ENCODE measurements at regions of chr16 and their contacts with region 1.

Region 1: DNA sequence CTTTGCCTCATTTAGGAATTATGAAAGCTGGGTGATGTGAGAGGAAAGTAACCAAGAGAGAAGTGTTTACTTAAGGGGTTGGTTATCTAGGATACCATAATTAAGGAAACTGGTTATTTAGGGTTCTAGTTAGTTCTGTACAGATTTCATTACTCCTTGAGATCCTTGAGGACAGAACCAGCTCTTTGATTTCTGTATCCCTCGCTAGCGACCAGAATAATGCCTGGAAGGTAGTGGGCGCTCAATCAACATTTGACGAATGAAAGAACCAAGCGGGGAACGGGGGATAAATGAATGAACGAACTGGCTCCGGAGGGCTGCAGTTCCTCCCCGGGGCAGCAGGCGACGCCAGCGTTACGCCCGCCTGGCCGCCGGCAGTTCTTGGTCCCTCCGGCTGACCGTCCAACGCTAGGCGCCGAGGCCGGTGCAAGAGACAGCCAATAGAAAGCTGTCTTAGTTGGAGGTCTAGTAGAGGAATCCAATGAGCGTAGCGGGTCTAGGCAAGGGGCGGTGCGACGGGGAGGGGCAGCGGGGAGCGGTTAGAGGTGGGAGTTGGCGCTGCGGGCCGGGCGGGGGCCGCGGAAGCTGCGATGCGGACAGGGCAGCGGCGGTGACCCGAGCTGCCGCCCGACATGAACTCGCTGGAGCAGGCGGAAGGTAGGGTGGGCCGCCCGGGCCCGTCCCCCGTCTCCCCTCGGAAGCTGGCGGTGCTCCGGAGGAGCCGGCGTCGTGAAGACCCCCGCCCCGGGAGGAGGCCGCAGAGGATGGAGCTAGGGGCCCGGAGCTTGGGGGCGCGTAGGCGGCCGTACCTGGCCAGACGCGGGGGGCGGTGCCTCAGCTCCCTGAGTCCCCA is at the start of gene CNEP1R1:
- DNase-seq: peak; percentile 96
- total RNA-seq, gene CNEP1R1: 17.9 TPM

Region 2: GRCh38 chr16:49918257-49918656 is 106.7 kb before region 1 on chr16:
- intact Hi-C with region 1: no loop called
- DNase-seq: no peak

Region 3: DNA sequence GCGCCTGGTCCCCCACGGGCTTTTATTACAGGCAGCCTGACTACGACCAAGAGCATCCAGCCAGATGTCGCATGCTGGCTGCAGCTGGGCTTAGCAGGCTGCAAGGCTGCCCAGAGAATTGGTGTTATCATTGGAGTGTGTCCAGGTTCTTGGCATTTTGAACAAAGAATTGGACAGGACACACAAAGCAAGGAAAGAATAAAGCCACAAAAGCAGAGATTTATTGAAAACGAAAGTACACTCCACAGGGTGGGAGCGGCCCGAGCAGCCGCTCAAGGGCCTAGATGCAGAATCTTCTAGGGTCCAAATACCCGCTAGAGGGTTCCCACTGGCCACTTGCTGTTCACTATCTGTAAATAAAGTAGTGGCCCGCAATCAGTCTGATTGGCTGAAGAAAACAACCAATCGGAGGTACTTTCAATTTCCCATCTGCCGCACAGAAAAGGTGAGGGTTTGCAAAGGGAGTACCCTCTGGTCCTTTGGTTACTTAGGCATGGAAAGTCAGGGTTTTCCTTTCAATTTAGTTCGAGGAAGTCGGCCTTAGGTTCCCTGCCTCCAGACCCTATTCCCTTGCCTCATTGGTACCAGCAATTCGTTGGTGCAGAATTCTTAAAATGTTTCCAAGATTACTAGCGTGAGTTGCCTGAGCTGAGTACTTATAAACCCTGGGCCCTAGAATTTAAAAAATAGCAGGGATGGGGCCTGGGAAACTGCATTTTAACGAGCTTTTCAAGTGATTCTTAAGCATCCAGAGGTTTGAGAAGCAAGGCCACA is 38.4 kb before region 1 on chr16:
- intact Hi-C with region 1: no loop called
- DNase-seq: no peak

Region 4: DNA sequence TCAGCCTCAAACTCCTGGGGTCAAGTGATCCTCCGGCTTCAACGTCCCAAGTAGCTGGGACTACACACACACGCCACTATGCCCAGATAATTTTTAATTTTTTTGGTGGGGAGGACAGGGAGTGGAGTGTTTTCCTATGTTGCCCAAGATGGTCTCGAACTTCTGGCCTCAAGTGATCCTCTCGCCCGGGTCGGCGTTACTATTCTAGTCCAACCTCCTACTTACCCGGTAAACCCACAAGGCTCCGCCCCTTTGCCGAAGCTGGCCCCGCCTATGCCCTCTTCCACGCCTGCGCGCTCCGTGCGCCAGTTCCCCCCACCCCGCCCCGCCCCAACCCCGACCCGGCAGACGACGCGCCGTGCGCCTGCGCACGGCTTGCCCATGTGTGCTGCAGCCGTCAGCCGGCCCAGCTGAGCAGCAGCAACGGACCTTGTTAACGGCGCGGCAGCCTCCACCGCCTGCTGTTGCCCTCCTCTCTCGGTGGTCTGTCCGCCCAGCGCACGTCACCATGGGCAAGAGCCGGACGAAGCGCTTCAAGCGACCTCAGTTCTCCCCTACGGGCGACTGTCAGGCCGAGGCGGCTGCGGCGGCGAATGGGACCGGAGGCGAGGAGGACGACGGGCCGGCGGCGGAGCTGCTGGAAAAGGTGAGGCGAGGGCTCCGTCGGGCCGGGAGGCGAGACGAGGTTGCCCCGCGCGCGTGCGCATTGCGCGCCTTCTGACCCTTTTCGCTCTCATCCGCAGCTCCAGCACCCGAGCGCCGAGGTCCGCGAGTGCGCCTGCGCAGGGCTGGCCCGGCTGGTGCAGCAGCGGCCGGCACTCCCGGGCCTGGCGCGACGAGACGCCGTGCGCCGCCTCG is 40.9 kb after region 1 on chr16 and contains the start of gene HEATR3:
- intact Hi-C with region 1: loop called (anchors 2 kb)
- DNase-seq: peak; percentile 98
- total RNA-seq, gene HEATR3: 10.3 TPM

Region 5: DNA sequence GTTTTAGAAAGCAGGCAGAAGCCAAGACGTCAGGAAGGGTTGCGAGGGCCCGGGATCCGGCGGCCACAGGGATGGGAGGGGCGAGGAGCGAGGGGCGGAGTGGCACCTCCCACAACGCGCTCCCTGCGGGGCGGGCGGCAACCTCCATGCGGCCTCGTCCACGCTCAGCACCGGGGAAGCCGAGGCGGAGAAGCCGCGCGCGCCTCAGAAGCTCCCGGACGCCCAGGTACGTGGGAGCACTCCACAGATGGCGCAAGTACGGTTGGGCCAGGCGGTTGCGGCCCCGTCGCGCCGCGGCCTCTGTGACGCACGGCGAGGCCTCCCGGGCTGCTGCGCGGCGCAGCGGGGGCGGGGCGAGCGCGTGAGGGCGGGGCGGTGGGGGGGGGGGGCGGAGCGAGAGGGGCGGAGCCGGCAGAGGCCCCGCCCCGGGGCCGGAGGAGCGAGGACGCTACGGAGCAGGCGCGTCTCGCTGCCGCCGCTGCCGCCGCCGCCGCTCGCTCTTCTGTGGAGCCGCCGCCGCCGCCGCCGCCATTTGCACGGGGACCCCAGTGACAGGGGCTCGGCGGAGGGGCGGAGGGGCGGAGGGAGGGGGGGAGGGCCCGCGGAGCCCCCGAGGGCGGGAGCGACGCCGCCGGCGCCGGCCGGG is 128.0 kb after region 1 on chr16 and contains the start of gene TENT4B:
- intact Hi-C with region 1: loop called (anchors 5 kb)
- DNase-seq: peak; percentile 95
- total RNA-seq, gene TENT4B: 9.1 TPM

Region 6: GRCh38 chr16:50665128-50665878 is 640.4 kb after region 1 on chr16:
- intact Hi-C with region 1: loop called (anchors 10 kb)
- DNase-seq: peak; percentile 93